Activated CD4-positive, alpha-beta T cell treated with anti-CD3 and anti-CD28 coated beads, Interleukin-2, amount 10 ng/mL, durations not matched to agents 24 days and 14 days (primary cell): ENCODE measurements at regions of chr10 and their contacts with region 1.

Region 1: DNA sequence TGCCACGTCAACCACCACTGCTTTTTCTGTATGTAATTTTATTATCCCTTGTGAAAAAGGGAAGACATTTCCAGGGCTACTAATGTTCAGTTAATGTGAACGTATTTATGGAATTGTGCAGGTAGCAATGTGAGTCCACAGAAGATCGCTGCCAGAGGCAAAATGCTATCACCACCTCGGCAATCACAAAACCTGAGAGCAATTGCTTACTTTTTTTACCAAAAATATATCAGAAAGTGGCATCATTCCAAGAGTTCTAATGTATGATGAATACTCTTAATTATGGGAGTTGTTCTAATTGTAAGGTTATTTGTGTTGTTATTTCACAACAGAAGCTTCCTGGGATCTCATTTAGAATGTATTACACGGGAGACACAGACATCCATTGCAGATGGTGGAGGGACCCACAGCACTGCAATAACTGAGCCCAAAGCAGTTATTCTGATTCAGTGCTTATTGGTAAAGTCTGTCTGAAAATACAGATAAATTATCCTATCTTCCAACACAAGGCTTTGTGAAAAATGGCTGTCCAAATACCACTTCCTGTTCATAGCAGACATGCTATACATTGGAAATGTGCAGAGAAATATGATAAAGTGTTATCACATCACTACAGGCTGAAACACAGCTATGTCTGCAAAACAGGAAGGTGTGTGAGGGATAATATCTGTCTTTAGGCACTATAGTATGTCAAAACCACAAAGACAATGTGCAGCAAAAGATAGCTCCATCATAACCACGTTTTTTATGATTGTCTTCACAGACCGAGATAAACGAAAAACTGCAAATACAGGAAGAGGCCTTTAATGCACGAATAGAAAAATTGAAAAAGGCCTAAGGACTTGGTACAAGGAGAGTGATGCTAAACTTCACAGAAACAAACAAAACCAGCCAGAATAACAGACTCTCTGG is 102.7 kb downstream of the CABCOCO1 start:
- DNase-seq: peak; percentile 64
- H3K4me3 Mint-ChIP-seq: peak overlapping the region; percentile 50
- H3K27ac Mint-ChIP-seq: peak overlapping the region; percentile 76
- H3K4me1 Mint-ChIP-seq: peaks cover 21% of the 10 kb centered on the region
- H3K27me3 Mint-ChIP-seq: peaks cover 1% of the 10 kb centered on the region

Region 2: DNA sequence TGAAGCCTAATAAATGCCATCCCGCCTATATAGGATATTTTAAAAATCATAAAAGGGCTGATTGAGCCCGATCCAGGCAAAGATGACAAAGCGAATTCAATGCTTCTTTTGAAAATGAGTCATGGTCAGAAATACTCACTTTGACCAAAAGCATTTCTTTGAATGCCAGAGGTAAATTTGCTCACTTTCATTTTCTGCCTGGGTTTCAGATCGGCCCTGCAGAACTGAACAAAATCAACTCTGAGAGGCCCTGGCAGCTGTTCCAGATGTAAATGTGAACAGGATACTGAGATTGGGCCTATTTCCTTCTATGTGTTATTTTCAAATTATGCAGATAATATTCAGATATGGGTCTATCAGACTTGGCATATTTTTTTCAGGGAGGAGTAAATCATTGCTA is 21.3 kb after region 1 on chr10:
- intact Hi-C with region 1: loop called (anchors 2 kb)
- DNase-seq: peak; percentile 69
- H3K4me3 Mint-ChIP-seq: no peak overlapping the region
- H3K27ac Mint-ChIP-seq: no peak overlapping the region
- H3K4me1 Mint-ChIP-seq: peaks cover 49% of the 10 kb centered on the region
- H3K27me3 Mint-ChIP-seq: no peaks in the 10 kb centered on the region